ENCODE measurements at regions of chr3 and their contacts with region 1.

Region 1: GRCh38 chr3:146241523-146242240 is 9.2 kb downstream of the PLSCR4 start:
- DNase-seq: peak; percentile 62 to 78
- ATAC-seq: peak; percentile 69
- H3K4me3 ChIP-seq: peak overlapping the region in 1 of 2 donors; percentile 20
- H3K27ac ChIP-seq: peak overlapping the region; percentile 90 to 98
- H3K4me1 ChIP-seq: peaks cover 0 to 2% of the 10 kb centered on the region in 2 donors
- H3K27me3 ChIP-seq: no peaks in the 10 kb centered on the region

Region 2: DNA sequence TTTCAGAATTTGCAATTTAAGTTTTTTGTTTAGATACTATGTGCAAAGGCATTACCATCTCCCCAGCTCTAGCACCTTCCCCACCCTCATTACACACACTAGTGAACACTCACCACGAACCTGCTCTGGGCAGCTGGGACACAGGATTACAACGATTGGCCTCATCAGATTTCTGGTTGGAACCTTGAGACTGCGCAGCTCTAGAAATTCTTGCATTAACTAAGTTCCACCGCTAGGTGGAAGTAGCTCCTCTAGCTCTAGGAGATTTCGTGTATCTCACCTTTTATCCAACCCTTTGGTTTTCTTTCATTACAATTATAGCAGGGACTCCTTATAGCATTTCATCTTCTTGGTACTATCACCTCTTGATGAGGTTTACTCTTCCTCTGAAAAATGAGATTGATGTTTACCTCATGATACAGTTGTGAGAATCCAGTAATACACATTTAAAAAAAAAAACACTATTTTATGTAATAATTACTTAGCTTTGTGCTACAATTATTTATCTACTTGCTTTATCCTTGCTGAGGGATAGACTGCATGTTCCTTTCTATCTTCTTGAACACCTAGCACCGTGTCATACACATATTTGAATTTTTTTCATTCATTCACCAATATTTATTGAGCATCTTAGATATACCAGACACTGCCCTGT is 52.0 kb before region 1 on chr3:
- intact Hi-C with region 1: no loop called
- DNase-seq: no peak
- ATAC-seq: peak; percentile 88
- H3K4me3 ChIP-seq: no peak overlapping the region
- H3K27ac ChIP-seq: no peak overlapping the region
- H3K4me1 ChIP-seq: no peaks in the 10 kb centered on the region
- H3K27me3 ChIP-seq: no peaks in the 10 kb centered on the region

Region 3: DNA sequence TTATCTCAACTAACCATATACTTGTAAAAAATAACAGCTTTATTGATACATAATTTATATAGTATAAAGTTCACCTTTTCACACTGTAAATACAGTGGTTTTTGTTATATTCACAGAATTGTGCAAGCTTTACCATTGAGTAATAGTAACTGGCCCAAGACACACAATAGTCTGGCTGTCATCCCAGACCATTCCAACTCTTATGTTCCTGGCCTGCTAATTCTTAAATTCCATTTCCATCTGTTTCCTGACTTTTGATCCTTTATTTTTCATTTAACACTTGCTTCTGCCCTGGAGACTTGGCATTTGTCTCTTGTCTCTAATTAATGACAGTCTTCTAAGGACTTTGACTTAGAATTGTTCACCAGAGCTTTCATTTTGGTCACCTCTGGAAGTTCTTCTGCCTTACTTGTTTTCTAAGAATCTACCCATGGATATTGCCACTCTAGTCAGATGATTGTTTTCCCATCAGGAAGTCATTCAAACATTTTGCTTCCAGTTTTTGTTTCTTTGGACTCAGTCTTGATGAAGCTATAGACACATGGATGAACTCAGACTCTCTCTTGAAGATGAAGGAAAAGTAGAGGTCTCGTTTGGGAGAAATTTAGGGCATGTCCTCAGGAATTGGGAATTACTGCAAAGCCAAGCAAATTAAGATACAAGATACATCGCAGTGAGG is 36.4 kb after region 1 on chr3:
- intact Hi-C with region 1: loop called in 1 of 2 experiments (anchors 5 kb)
- DNase-seq: no peak
- ATAC-seq: peak; percentile 81
- H3K4me3 ChIP-seq: no peak overlapping the region
- H3K27ac ChIP-seq: peak overlapping the region; percentile 76 to 90
- H3K4me1 ChIP-seq: peaks cover 2 to 10% of the 10 kb centered on the region in 2 donors
- H3K27me3 ChIP-seq: no peaks in the 10 kb centered on the region

Measured in aorta (tissue), 5 donors.